ENCODE measurements at regions of chr5 and their contacts with region 1.

Region 1: GRCh38 chr5:25362799-25363198 is 718.0 kb upstream of the CDH10 start:
- DNase-seq: no peak
- ATAC-seq: no peak
- H3K4me3 ChIP-seq: no peak overlapping the region
- H3K27ac ChIP-seq: no peak overlapping the region
- H3K4me1 ChIP-seq: no peaks in the 10 kb centered on the region
- H3K27me3 ChIP-seq: no peaks in the 10 kb centered on the region
- CTCF ChIP-seq: no peak
- POLR2A ChIP-seq: no peak
- RAD21 ChIP-seq: no peak

Region 2: GRCh38 chr5:25489834-25490538 is 127.2 kb after region 1 on chr5:
- CTCF ChIA-PET with region 1: no interaction called
- POLR2A ChIA-PET with region 1: no interaction called
- dilution Hi-C with region 1: no loop called
- in situ Hi-C with region 1: no loop called
- intact Hi-C with region 1: no loop called
- DNase-seq: no peak
- ATAC-seq: no peak
- H3K4me3 ChIP-seq: no peak overlapping the region
- H3K27ac ChIP-seq: no peak overlapping the region
- H3K4me1 ChIP-seq: no peaks in the 10 kb centered on the region
- H3K27me3 ChIP-seq: no peaks in the 10 kb centered on the region
- CTCF ChIP-seq: no peak
- POLR2A ChIP-seq: no peak
- RAD21 ChIP-seq: no peak

Region 3: GRCh38 chr5:26986985-26987384 is 1624.2 kb after region 1 on chr5:
- CTCF ChIA-PET with region 1: no interaction called
- POLR2A ChIA-PET with region 1: interaction called, 26 read pairs
- dilution Hi-C with region 1: no loop called
- in situ Hi-C with region 1: no loop called
- intact Hi-C with region 1: no loop called
- DNase-seq: no peak
- ATAC-seq: no peak
- H3K4me3 ChIP-seq: no peak overlapping the region
- H3K27ac ChIP-seq: no peak overlapping the region
- H3K4me1 ChIP-seq: no peaks in the 10 kb centered on the region
- H3K27me3 ChIP-seq: no peaks in the 10 kb centered on the region
- CTCF ChIP-seq: no peak
- POLR2A ChIP-seq: no peak
- RAD21 ChIP-seq: no peak